Kidney (tissue), 22 donors: ENCODE measurements at regions of chr6 and their contacts with region 1.

Region 1: GRCh38 chr6:133923938-133924593 is 29.0 kb upstream of the TBPL1 start:
- DNase-seq: peak in 4 of 5 donors; percentile 66 to 92 (median 82)
- H3K4me3 ChIP-seq: no peak overlapping the region
- H3K27ac ChIP-seq: no peak overlapping the region
- H3K4me1 ChIP-seq: no peaks in the 10 kb centered on the region
- H3K27me3 ChIP-seq: no peaks in the 10 kb centered on the region
- CTCF ChIP-seq: peak; percentile 93

Region 2: GRCh38 chr6:133992992-133993680 is 69.1 kb after region 1 on chr6:
- intact Hi-C with region 1: no loop called
- DNase-seq: no peak
- H3K4me3 ChIP-seq: no peak overlapping the region
- H3K27ac ChIP-seq: no peak overlapping the region
- H3K4me1 ChIP-seq: no peaks in the 10 kb centered on the region
- H3K27me3 ChIP-seq: no peaks in the 10 kb centered on the region
- CTCF ChIP-seq: no peak

Region 3: DNA sequence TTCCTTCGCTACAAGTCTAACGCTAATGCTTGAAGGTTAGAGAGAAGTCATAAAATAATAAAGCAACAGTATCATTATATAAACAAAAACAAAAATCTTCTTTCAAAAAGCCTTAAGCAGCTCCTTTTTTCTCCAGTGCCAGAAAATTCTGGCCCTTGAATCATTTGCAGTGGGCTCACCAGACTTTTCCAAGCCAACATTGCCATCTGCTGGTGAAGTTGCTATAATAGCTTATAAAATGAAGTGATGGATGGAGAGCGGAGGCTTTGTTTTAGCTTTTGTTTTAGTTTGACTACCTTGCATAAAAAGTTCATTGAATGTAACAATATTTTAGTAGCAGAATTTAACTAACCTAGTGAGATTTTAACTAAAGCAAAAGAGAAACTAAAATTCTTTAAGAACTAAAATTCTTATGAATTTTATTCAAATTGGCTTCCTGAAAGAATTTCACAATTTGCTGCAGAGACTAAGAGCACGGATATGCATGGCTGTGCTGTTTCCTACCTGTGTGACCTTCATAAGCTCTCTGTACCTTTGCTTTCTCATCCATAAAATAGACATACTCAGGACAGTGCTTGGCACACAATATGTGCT is 173.1 kb after region 1 on chr6:
- intact Hi-C with region 1: loop called (anchors 5 kb)
- DNase-seq: peak in 4 of 5 donors; percentile 61 to 94 (median 83)
- H3K4me3 ChIP-seq: no peak overlapping the region
- H3K27ac ChIP-seq: no peak overlapping the region
- H3K4me1 ChIP-seq: no peaks in the 10 kb centered on the region
- H3K27me3 ChIP-seq: no peaks in the 10 kb centered on the region
- CTCF ChIP-seq: peak; percentile 60

Region 4: GRCh38 chr6:134619789-134620188 is 695.7 kb after region 1 on chr6:
- intact Hi-C with region 1: no loop called
- DNase-seq: no peak
- H3K4me3 ChIP-seq: no peak overlapping the region
- H3K27ac ChIP-seq: no peak overlapping the region
- H3K4me1 ChIP-seq: no peaks in the 10 kb centered on the region
- H3K27me3 ChIP-seq: no peaks in the 10 kb centered on the region
- CTCF ChIP-seq: no peak